GM12878 (cell line): ENCODE measurements at regions of chr5 and their contacts with region 1.

Region 1: GRCh38 chr5:7886849-7887475 is 18.0 kb downstream of the MTRR start:
- DNase-seq: no peak
- ATAC-seq: peak; percentile 55
- H3K4me3 ChIP-seq: no peak overlapping the region
- H3K27ac ChIP-seq: no peak overlapping the region
- H3K4me1 ChIP-seq: no peaks in the 10 kb centered on the region
- H3K27me3 ChIP-seq: no peaks in the 10 kb centered on the region
- CTCF ChIP-seq: peak; percentile 25 to 52 (median 45); a peak in 4 of 6 replicates
- EP300 ChIP-seq: no peak
- POLR2A ChIP-seq: no peak
- RAD21 ChIP-seq: peak; percentile 50

Region 2: DNA sequence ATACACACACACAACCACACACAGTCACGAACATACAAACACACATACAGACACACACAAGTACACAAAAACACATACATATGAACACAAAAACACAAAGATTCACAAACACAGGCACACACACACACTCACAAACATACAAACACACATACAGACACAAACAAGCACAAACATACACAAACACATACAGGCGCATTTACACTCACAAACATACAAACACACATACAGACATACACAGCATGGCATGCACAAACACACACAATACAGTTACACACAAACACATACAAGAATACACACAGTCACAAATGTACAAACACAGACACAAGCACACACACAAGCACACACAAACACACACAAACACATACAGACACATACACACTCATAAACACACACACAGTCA is 925.8 kb before region 1 on chr5:
- CTCF ChIA-PET with region 1: no interaction called
- POLR2A ChIA-PET with region 1: no interaction called
- RAD21 ChIA-PET with region 1: no interaction called
- SMC1A ChIA-PET with region 1: no interaction called
- in situ Hi-C with region 1: no loop called
- intact Hi-C with region 1: no loop called
- DNase-seq: no peak
- ATAC-seq: no peak
- H3K4me3 ChIP-seq: no peak overlapping the region
- H3K27ac ChIP-seq: no peak overlapping the region
- H3K4me1 ChIP-seq: no peaks in the 10 kb centered on the region
- H3K27me3 ChIP-seq: no peaks in the 10 kb centered on the region
- CTCF ChIP-seq: no peak
- EP300 ChIP-seq: no peak
- POLR2A ChIP-seq: no peak
- RAD21 ChIP-seq: no peak

Region 3: DNA sequence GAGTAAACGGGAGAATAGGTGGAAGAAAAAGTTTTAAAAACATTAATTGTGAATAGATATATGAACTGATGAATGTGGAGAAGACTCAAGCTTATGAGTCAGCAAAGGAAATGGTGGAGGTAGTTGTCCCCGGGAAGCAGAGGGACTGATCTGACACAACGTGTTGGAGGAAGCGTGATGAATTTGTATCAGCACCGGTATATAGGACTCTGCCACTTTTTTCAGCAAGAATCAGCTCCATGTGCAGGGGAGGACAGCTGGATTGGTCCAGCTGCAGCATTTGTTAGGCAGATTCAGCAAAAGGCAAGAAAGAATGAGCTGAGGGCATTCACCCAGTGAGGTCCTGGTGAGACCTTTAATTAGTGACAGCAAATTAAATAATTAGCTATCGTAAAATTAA is 897.7 kb before region 1 on chr5:
- CTCF ChIA-PET with region 1: no interaction called
- POLR2A ChIA-PET with region 1: no interaction called
- RAD21 ChIA-PET with region 1: no interaction called
- SMC1A ChIA-PET with region 1: no interaction called
- in situ Hi-C with region 1: no loop called
- intact Hi-C with region 1: no loop called
- DNase-seq: no peak
- ATAC-seq: no peak
- H3K4me3 ChIP-seq: no peak overlapping the region
- H3K27ac ChIP-seq: no peak overlapping the region
- H3K4me1 ChIP-seq: no peaks in the 10 kb centered on the region
- H3K27me3 ChIP-seq: no peaks in the 10 kb centered on the region; a peak in 1 of 4 replicates
- CTCF ChIP-seq: no peak
- EP300 ChIP-seq: no peak
- POLR2A ChIP-seq: no peak
- RAD21 ChIP-seq: no peak

Region 4: DNA sequence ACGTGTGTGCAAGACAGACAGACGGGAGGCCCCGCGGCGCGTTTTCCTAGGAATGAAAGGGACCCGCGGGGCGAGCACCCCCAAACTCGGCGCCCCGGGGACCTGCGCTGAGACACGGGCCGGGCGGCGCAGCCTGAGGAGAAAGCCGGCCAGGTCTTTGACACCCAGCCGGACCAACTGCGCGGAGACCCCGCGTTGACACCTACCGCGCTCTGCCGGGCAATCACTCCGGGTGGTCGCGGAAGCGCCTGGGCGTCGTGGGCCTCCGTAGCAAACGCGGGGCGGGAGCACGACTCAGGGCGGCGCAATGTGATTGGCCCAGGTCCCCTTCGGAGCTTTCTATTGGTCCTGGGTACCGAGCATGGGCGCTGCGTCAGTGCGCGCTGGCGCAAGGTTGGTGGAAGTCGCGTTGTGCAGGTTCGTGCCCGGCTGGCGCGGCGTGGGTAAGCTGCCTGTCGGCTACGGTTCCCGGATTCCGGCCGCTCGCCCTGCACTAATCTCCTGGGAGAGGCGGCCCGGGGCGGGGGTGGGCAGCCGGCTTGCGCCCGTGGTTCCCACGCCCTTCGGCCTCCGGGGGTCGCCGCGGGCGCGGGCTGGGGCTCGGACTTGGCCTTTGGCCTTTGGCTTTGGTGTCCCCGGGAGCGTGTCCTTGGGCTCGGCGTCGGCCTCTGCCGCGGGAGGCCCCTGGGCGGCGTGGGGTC is 18.0 kb before region 1 on chr5 and contains the starts of genes FASTKD3 and MTRR:
- CTCF ChIA-PET with region 1: interaction called, 92 read pairs
- POLR2A ChIA-PET with region 1: interaction called, 4 read pairs
- RAD21 ChIA-PET with region 1: interaction called, 13 read pairs
- SMC1A ChIA-PET with region 1: interaction called, 17 read pairs
- in situ Hi-C with region 1: no loop called
- intact Hi-C with region 1: no loop called
- DNase-seq: peak; percentile 66
- ATAC-seq: peak; percentile 99
- H3K4me3 ChIP-seq: peak within 1 kb of the TSS; percentile 97
- H3K27ac ChIP-seq: peak within 1 kb of the TSS; percentile 84
- H3K4me1 ChIP-seq: peaks cover 29% of the 10 kb centered on the region
- H3K27me3 ChIP-seq: no peaks in the 10 kb centered on the region
- CTCF ChIP-seq: no peak
- EP300 ChIP-seq: no peak
- POLR2A ChIP-seq: peak; percentile 98
- RAD21 ChIP-seq: no peak
- polyA plus RNA-seq, gene FASTKD3: 42.6 to 59.6 TPM
- polyA plus RNA-seq, gene MTRR: 13.8 to 18.2 TPM

Region 5: DNA sequence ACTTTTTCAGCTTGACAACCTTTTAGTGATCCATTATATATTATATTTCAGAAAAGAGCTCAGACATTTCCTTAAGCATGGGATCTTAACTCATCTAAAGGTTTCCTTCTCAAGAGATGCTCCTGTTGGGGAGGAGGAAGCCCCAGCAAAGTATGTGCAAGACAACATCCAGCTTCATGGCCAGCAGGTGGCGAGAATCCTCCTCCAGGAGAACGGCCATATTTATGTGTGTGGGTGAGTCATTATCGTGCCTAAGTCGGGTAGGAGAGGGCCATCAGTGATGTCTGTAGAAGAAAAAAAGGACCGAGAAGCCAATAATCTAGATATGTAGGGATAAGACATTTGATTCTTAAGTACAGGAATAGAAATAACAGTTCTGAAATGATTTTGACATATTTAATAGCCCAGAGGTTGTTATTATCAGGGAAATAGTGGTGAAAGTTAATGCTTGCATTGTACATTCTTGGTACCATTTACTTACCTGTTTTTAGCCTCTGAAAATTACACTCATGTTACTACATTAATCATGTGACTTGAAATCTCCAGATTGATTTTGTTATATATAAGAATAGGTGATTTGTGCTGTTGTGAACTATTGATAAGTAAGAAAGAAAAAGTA is 10.2 kb after region 1 on chr5:
- CTCF ChIA-PET with region 1: interaction called, 28 read pairs
- POLR2A ChIA-PET with region 1: no interaction called
- RAD21 ChIA-PET with region 1: no interaction called
- SMC1A ChIA-PET with region 1: interaction called, 7 read pairs
- in situ Hi-C with region 1: no loop called
- intact Hi-C with region 1: no loop called
- DNase-seq: no peak
- ATAC-seq: peak; percentile 92
- H3K4me3 ChIP-seq: no peak overlapping the region
- H3K27ac ChIP-seq: no peak overlapping the region
- H3K4me1 ChIP-seq: peaks cover 9% of the 10 kb centered on the region
- H3K27me3 ChIP-seq: no peaks in the 10 kb centered on the region
- CTCF ChIP-seq: peak; percentile 37 to 58 (median 41); a peak in 5 of 6 replicates
- EP300 ChIP-seq: no peak
- POLR2A ChIP-seq: no peak
- RAD21 ChIP-seq: 0 out of 2 replicates have a peak, but pooled peaks have one; percentile 14

Region 6: GRCh38 chr5:7904170-7904569 is 17.2 kb after region 1 on chr5:
- CTCF ChIA-PET with region 1: interaction called, 28 read pairs
- POLR2A ChIA-PET with region 1: no interaction called
- RAD21 ChIA-PET with region 1: interaction called, 5 read pairs
- SMC1A ChIA-PET with region 1: interaction called, 7 read pairs
- in situ Hi-C with region 1: no loop called
- intact Hi-C with region 1: no loop called
- DNase-seq: no peak
- ATAC-seq: peak; percentile 56
- H3K4me3 ChIP-seq: no peak overlapping the region
- H3K27ac ChIP-seq: no peak overlapping the region
- H3K4me1 ChIP-seq: no peaks in the 10 kb centered on the region
- H3K27me3 ChIP-seq: no peaks in the 10 kb centered on the region
- CTCF ChIP-seq: no peak
- EP300 ChIP-seq: no peak
- POLR2A ChIP-seq: no peak
- RAD21 ChIP-seq: no peak

Region 7: GRCh38 chr5:7910738-7911428 is 23.9 kb after region 1 on chr5:
- CTCF ChIA-PET with region 1: interaction called, 7 read pairs
- POLR2A ChIA-PET with region 1: no interaction called
- RAD21 ChIA-PET with region 1: interaction called, 11 read pairs
- SMC1A ChIA-PET with region 1: interaction called, 4 read pairs
- in situ Hi-C with region 1: no loop called
- intact Hi-C with region 1: no loop called
- DNase-seq: no peak
- ATAC-seq: peak; percentile 85
- H3K4me3 ChIP-seq: 0 out of 2 replicates have a peak overlapping the region, but pooled peaks have one; percentile 12
- H3K27ac ChIP-seq: peak overlapping the region; percentile 75
- H3K4me1 ChIP-seq: peaks cover 5% of the 10 kb centered on the region; the same call in 1 of the 2 replicates
- H3K27me3 ChIP-seq: no peaks in the 10 kb centered on the region
- CTCF ChIP-seq: no peak
- EP300 ChIP-seq: no peak
- POLR2A ChIP-seq: no peak
- RAD21 ChIP-seq: no peak

Region 8: DNA sequence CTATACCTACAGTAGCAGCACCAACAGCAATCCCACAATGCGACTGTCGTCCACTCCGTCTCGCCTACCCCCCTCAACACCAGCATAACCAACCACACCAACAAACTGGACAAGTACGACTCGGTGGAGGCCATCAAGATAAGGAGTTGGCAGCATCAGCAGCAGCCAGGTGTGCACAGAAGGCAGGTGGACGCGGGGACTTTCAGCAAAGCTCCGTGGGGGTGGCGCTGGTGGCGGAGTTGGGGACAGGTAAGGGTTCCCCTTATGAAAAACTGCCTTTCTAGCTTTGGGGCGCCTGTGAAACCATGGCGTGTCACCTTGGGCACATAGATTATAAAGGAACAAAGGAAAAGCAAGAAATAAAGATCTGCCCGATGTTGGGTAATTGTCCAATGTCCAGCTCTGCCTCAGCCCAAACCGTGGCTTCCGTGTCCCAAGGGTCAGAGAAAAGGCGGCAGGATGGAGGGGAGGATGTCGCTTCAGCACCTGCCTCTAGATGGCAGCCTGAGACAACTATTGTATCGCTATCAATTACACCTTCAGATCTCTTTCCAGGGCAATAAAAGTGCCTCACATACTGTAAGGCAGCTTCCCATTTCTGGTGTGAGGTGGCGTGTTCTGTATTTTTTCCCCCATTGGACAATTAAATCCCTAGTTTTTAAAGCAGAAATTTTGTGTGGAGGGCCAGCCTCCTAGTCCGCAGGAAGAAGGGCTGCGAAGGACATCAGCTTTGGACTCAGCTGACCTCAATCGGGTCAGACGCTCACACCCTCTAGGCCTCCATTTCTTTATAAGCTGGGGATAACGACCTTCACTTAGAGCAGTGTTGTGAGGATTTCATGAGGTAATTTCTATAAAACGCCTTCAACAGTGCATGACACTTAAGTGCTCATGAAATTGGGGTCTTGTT is 40.8 kb after region 1 on chr5:
- CTCF ChIA-PET with region 1: interaction called, 32 read pairs
- POLR2A ChIA-PET with region 1: no interaction called
- RAD21 ChIA-PET with region 1: interaction called, 7 read pairs
- SMC1A ChIA-PET with region 1: interaction called, 15 read pairs
- in situ Hi-C with region 1: no loop called
- intact Hi-C with region 1: no loop called
- DNase-seq: no peak
- ATAC-seq: peak; percentile 96
- H3K4me3 ChIP-seq: no peak overlapping the region
- H3K27ac ChIP-seq: no peak overlapping the region
- H3K4me1 ChIP-seq: no peaks in the 10 kb centered on the region
- H3K27me3 ChIP-seq: no peaks in the 10 kb centered on the region; a peak in 1 of 4 replicates
- CTCF ChIP-seq: peak; percentile 74 to 81 (median 77); a peak in 5 of 6 replicates
- EP300 ChIP-seq: no peak
- POLR2A ChIP-seq: no peak
- RAD21 ChIP-seq: peak; percentile 83